ENCODE measurements at regions of chr20 and their contacts with region 1.

Region 1: GRCh38 chr20:12916699-12917098 is 92.1 kb upstream of the SPTLC3 start:
- DNase-seq: no peak
- H3K4me3 ChIP-seq: no peak overlapping the region
- H3K27ac ChIP-seq: no peak overlapping the region
- H3K4me1 ChIP-seq: no peaks in the 10 kb centered on the region
- H3K27me3 ChIP-seq: no peaks in the 10 kb centered on the region
- CTCF ChIP-seq: no peak

Region 2: DNA sequence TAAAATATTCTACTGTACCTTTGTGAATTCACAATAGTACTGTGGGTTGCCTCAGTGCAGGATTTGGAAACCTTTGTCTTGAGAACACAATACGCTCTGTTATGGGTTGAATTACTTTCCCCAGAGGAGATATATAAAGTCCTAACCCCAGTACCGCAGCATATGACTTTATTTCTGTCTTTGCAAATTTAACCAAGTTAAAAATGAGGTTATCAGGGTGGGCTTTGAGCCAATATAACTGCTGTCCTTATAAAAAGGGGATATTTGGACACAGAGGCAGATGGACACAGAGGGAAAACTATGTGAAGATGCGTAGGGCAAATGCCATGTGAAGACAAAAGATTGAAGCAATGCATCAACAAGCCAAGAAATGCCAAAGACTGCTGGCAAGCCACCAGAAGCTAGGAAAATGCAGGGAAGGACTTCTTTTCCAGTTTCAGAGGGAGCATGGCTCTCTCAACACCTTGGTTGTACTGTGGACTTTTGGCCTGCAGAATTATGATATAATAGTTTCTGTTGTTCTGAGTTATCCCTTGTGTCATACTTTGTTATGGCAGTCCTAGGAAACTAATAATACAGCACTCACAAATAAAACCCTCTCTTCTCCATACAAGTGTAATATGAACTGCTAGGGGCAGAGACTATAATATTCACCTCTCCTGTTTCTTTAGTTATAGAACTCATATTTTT is 200.6 kb before region 1 on chr20:
- intact Hi-C with region 1: no loop called
- DNase-seq: no peak
- H3K4me3 ChIP-seq: no peak overlapping the region
- H3K27ac ChIP-seq: no peak overlapping the region
- H3K4me1 ChIP-seq: peaks cover 0 to 5% of the 10 kb centered on the region in 2 donors
- H3K27me3 ChIP-seq: no peaks in the 10 kb centered on the region
- CTCF ChIP-seq: no peak

Region 3: GRCh38 chr20:12847872-12848271 is 68.8 kb before region 1 on chr20:
- intact Hi-C with region 1: loop called (anchors 10 kb)
- DNase-seq: no peak
- H3K4me3 ChIP-seq: no peak overlapping the region
- H3K27ac ChIP-seq: no peak overlapping the region
- H3K4me1 ChIP-seq: no peaks in the 10 kb centered on the region
- H3K27me3 ChIP-seq: no peaks in the 10 kb centered on the region
- CTCF ChIP-seq: no peak

Measured in ascending aorta (tissue), 2 donors.